ENCODE measurements at regions of chr7 and their contacts with region 1.

Region 1: GRCh38 chr7:105752671-105753275 is 123.6 kb downstream of the ATXN7L1 start:
- DNase-seq: no peak
- H3K4me3 ChIP-seq: no peak overlapping the region
- H3K27ac ChIP-seq: no peak overlapping the region
- H3K27me3 ChIP-seq: no peaks in the 10 kb centered on the region
- CTCF ChIP-seq: no peak

Region 2: DNA sequence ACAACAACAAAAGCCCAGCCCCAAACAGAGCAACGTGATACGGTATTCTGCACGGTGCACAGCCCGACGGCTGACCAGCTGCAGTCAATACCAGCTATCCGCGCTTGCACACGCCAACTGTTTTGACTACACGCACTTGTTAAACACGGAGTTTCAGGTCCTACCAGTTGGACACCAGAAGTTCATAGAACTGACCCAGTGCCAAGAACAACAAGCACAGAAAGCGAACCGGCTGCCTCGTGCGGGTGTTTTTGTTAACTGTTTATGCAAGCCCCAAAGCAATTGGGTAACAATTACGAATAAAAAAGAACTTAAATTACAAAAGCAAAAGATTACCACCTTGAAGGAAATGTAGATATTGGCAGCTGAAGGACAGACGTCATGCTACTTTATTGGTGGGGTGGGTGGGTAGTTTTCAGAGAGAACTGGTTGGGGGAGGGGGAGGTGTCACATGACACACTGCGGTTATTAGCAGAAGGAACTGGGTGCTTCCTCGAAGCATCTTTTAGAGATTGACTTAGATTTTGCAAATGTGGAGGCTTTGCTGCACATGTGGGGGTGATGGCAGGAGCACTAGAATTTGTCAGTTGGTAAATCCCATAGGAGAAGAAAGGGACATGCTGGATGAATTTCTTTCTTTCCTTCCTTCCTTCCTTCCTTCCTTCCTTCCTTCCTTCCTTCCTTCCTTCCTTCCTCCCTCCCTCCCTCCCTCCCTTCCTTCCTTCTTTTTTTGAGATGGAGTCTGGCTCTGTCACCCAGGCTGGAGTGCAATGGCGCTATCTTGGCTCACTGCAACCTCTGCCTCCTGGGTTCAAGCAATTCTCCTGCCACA is 60.8 kb before region 1 on chr7:
- intact Hi-C with region 1: loop called in 1 of 2 experiments (anchors 5 kb)
- DNase-seq: peak in 6 of 10 donors; percentile 33 to 55 (median 50)
- H3K4me3 ChIP-seq: peak overlapping the region; percentile 27 to 73 (median 59)
- H3K27ac ChIP-seq: peak overlapping the region in 31 of 59 donors; percentile 1 to 75 (median 45)
- H3K27me3 ChIP-seq: no peaks in the 10 kb centered on the region
- CTCF ChIP-seq: no peak

Measured in dorsolateral prefrontal cortex (tissue), 120 donors.